ENCODE measurements at regions of chr16 and their contacts with region 1.

Region 1: DNA sequence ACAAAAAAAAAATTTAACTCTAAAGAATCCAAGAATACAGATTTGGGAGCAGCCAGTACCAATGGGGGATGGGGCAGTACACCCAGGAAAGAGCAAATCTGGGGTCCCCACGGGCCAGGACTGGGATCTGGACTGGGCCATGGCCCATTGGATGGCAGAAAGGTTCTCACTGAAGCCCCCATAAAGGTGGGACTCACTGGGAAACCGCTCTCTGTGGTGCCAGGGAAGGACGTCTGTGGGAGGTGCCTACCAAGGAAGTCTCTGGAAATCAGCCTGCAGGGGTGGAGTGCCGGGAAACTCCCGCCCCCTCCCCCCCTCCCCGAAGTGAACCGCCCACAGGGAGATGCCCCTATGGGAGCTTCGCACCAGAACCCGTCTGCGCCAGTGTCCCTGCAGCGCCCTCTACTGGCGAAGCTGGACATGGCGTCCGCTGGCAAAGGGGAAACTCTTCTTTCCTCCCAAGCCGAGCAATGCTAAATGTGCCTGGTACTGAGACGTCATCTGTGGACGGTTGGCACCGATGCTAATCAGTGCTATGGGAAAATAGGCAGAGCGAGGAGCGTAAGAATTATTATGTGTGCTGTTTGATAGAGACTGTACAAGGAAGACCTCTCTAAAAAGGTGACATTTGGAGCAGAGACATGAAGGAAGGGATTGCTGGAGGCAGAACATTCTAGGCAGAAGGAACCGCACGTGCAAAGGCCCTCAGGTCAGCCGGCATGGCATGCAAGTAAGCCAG is 671.1 kb downstream of the WWOX start:
- DNase-seq: peak in 1 of 2 experiments; percentile 35
- H3K4me3 ChIP-seq: no peak overlapping the region
- H3K27ac ChIP-seq: no peak overlapping the region
- H3K4me1 ChIP-seq: no peaks in the 10 kb centered on the region
- H3K27me3 ChIP-seq: no peaks in the 10 kb centered on the region
- CTCF ChIP-seq: peak; percentile 58

Region 2: GRCh38 chr16:78783632-78784031 is 13.1 kb after region 1 on chr16:
- CTCF ChIA-PET with region 1: no interaction called
- POLR2A ChIA-PET with region 1: interaction called, 10 read pairs
- intact Hi-C with region 1: no loop called
- DNase-seq: no peak
- H3K4me3 ChIP-seq: no peak overlapping the region
- H3K27ac ChIP-seq: no peak overlapping the region
- H3K4me1 ChIP-seq: no peaks in the 10 kb centered on the region
- H3K27me3 ChIP-seq: no peaks in the 10 kb centered on the region
- CTCF ChIP-seq: no peak